Naive thymus-derived CD4-positive, alpha-beta T cell (primary cell): ENCODE measurements at regions of chr10 and their contacts with region 1.

Region 1: DNA sequence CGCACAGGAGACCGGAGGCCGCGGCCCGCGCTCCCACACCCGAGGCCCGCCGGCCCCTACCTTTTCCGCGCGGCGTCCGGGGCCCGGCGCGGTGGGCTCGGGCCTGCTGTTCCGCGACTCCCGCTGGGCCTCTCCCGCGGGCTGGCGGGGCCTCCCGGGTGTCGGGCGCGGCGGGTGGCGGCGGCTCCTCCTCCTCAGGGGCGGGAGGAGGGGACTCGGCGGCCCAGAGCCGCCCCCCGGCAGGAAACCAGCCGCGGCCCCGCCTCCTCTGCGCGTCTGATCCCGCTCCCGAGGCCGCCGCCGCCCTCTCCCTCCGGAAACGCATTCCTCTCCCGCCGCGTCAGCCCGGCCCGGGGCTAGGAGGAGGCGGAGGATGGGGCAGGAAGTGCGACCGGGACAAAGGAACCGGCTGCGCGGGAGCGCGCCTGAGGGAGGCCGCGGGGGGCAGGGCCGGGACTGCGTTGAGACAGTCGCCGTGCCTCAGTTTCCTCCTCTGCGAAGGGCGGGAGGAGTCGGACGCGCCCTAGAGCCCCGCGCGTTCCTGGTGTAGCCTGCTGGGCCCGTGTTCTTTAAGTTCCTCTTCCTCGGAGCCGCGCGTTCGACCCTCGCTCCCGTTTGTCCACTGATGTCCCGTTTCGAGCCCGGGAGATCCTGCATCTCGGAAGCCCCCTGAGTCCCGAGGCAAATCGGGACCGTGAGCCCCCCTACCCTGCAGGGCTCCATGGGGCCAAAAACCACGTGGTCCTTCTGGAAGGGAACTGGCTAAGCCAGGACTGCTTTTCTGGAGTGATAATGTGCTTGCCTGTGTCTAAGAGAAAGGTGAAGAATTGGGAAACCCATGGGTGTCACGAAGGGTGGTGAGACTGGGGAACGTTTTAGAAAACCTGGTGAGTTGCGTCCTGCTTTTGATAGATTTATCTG is at the start of gene ITGB1:
- DNase-seq: peak; percentile 73 to 91 (median 82)
- ATAC-seq: peak; percentile 95
- H3K4me3 ChIP-seq: peak within 1 kb of the TSS; percentile 88
- H3K4me3 Mint-ChIP-seq: peak within 1 kb of the TSS; percentile 78 to 95 (median 88)
- H3K27ac ChIP-seq: peak within 1 kb of the TSS; percentile 68
- H3K27ac Mint-ChIP-seq: peak within 1 kb of the TSS; percentile 74 to 90 (median 82)
- H3K4me1 ChIP-seq: peaks cover 7 to 8% of the 10 kb centered on the region in 2 donors
- H3K4me1 Mint-ChIP-seq: peaks cover 29 to 60% (median 54%) of the 10 kb centered on the region in 7 donors
- H3K27me3 ChIP-seq: no peaks in the 10 kb centered on the region
- H3K27me3 Mint-ChIP-seq: peaks cover 0 to 13% (median 0%) of the 10 kb centered on the region in 5 donors
- total RNA-seq, gene ITGB1: 43.2 to 205 (median 60.8) TPM

Region 2: GRCh38 chr10:32911285-32912016 is 46.9 kb before region 1 on chr10:
- CTCF ChIA-PET with region 1: no interaction called
- POLR2A ChIA-PET with region 1: no interaction called
- intact Hi-C with region 1: loop called in 1 of 2 experiments (anchors 1 kb)
- DNase-seq: no peak
- ATAC-seq: peak; percentile 34
- H3K4me3 ChIP-seq: no peak overlapping the region
- H3K4me3 Mint-ChIP-seq: no peak overlapping the region
- H3K27ac ChIP-seq: no peak overlapping the region
- H3K27ac Mint-ChIP-seq: no peak overlapping the region
- H3K4me1 ChIP-seq: no peaks in the 10 kb centered on the region
- H3K4me1 Mint-ChIP-seq: peaks cover 0 to 8% (median 0%) of the 10 kb centered on the region in 7 donors
- H3K27me3 ChIP-seq: no peaks in the 10 kb centered on the region
- H3K27me3 Mint-ChIP-seq: no peaks in the 10 kb centered on the region

Region 3: GRCh38 chr10:32971536-32972091 is 13.3 kb after region 1 on chr10:
- CTCF ChIA-PET with region 1: no interaction called
- POLR2A ChIA-PET with region 1: interaction called, 5 read pairs
- intact Hi-C with region 1: loop called in 1 of 2 experiments (anchors 1 kb)
- DNase-seq: no peak
- ATAC-seq: no peak
- H3K4me3 ChIP-seq: no peak overlapping the region
- H3K4me3 Mint-ChIP-seq: no peak overlapping the region
- H3K27ac ChIP-seq: no peak overlapping the region
- H3K27ac Mint-ChIP-seq: peak overlapping the region in 1 of 9 donors; percentile 7
- H3K4me1 ChIP-seq: no peaks in the 10 kb centered on the region
- H3K4me1 Mint-ChIP-seq: peaks cover 0 to 6% (median 0%) of the 10 kb centered on the region in 7 donors
- H3K27me3 ChIP-seq: no peaks in the 10 kb centered on the region
- H3K27me3 Mint-ChIP-seq: peaks cover 0 to 5% (median 0%) of the 10 kb centered on the region in 5 donors

Region 4: DNA sequence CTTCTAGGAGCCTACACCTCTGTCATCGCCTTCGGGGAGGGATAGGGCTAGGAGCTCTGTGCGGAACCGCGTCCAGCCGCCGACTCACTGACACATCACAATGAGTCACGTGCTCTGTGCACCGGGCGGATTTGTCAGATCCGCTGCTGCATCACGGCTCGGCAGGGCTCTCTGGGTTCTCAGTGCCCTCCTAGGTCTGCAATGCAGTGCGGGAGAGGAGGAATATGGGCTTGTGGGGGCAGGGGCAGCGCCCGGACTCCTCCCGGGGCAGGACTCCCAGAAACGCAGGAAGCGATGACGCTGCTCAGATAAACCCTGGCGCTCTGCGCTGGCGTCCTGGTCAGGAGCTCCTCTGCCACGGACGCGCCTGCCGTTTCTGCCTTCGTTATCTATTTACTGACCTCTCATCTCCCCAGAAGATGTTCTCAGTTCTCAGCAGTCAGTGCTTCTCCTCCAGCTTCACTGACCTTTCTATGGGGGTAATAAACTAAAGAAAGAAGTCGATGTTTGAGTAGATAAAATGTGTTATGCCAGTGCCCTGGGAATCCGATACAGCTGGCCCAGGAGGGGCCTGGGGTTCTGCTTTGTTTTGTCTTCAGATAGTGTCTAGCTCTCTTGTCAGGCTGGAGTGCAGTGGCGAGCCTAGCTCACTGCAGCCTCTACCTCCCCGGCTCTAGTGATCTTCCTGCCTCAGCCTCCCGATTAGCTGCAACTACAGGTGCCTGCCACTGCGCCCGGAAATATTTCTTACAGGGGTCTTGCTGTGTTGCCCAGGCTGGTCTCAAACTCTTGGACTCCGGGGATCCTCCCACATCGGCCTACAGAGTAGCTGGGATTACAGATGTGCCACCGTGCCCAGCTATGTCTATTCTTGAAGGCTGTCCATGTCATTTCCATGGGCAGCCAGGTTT is 22.5 kb after region 1 on chr10:
- CTCF ChIA-PET with region 1: interaction called, 3 read pairs
- POLR2A ChIA-PET with region 1: interaction called, 6 read pairs
- intact Hi-C with region 1: loop called (anchors 1 kb)
- DNase-seq: peak; percentile 54 to 84 (median 66)
- ATAC-seq: peak; percentile 95
- H3K4me3 ChIP-seq: peak overlapping the region; percentile 64
- H3K4me3 Mint-ChIP-seq: peak overlapping the region; percentile 90 to 99 (median 95)
- H3K27ac ChIP-seq: peak overlapping the region; percentile 56
- H3K27ac Mint-ChIP-seq: peak overlapping the region; percentile 82 to 99 (median 93)
- H3K4me1 ChIP-seq: peaks cover 11 to 32% of the 10 kb centered on the region in 2 donors
- H3K4me1 Mint-ChIP-seq: peaks cover 15 to 33% (median 24%) of the 10 kb centered on the region in 7 donors
- H3K27me3 ChIP-seq: no peaks in the 10 kb centered on the region
- H3K27me3 Mint-ChIP-seq: peaks cover 0 to 5% (median 0%) of the 10 kb centered on the region in 5 donors

Region 5: DNA sequence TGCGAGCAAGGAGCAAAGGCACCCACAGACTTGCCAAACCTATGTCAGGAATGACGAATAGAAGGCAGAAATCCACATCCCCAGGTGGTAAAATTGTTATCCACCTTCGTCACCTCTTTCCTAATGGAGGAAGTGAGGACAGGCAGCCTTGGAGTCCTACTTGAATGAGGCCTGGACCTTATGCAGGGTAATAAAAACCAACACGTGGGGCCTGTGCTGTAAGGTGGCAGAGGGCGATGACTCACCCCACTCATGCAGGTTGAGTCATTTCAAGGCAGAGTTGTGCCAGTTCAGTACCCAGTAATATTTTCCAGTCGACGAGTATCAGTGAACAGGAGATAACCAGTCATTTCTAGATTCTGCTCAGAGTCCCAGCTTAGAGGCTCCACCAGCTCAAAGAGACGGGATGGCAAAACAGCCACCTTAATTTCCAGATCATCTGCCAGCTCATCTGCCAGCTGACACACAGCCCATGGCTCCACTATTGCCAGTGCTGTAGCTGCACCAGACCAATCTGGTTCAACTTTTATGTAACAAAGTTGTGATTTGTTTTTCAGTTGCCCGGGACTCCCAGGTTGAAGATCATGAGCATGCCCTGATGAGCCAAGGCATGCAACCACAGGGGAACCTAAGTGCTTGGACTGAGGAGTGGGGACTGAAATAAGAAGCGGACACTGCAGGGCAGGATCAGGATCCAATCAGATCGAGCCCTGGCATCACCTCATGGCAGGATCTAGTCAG is 175.8 kb after region 1 on chr10:
- CTCF ChIA-PET with region 1: no interaction called
- POLR2A ChIA-PET with region 1: no interaction called
- intact Hi-C with region 1: loop called (anchors 1 to 5 kb)
- DNase-seq: peak in 2 of 9 donors; percentile 61 to 64
- ATAC-seq: peak; percentile 58
- H3K4me3 ChIP-seq: no peak overlapping the region
- H3K4me3 Mint-ChIP-seq: peak overlapping the region in 2 of 10 donors; percentile 27 to 50
- H3K27ac ChIP-seq: no peak overlapping the region
- H3K27ac Mint-ChIP-seq: peak overlapping the region in 8 of 9 donors; percentile 54 to 95 (median 82)
- H3K4me1 ChIP-seq: peaks cover 35 to 85% of the 10 kb centered on the region in 2 donors
- H3K4me1 Mint-ChIP-seq: peaks cover 25 to 78% (median 57%) of the 10 kb centered on the region in 7 donors
- H3K27me3 ChIP-seq: no peaks in the 10 kb centered on the region
- H3K27me3 Mint-ChIP-seq: no peaks in the 10 kb centered on the region

Region 6: DNA sequence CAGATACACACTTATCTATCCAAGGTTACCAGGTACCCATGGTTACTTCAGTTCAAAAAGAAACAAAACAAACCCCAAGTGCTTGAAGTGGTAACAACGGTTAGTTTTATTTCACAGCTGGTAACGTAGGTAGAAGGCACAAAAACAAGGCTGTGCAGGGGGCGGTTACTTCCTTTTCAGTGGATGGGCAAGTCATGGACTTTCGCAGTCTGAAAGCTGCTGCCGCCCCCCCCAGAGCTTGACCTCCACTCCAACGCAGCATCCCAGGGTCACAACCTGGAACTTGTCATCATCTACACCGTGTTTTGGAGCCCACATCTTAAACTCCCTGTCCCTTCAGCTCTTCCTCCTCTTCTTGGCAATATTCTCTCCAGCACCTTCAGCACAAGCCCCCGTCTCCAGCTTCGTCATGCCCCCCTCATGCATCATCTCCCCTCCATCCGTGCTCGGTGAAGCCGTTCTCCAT is 180.9 kb after region 1 on chr10:
- CTCF ChIA-PET with region 1: no interaction called
- POLR2A ChIA-PET with region 1: no interaction called
- intact Hi-C with region 1: loop called (anchors 1 to 5 kb)
- DNase-seq: peak; percentile 63 to 97 (median 95)
- ATAC-seq: peak; percentile 90
- H3K4me3 ChIP-seq: peak overlapping the region; percentile 31
- H3K4me3 Mint-ChIP-seq: peak overlapping the region; percentile 71 to 87 (median 80)
- H3K27ac ChIP-seq: peak overlapping the region; percentile 65
- H3K27ac Mint-ChIP-seq: peak overlapping the region; percentile 92 to 100 (median 96)
- H3K4me1 ChIP-seq: peaks cover 41 to 65% of the 10 kb centered on the region in 2 donors
- H3K4me1 Mint-ChIP-seq: peaks cover 30 to 77% (median 67%) of the 10 kb centered on the region in 7 donors
- H3K27me3 ChIP-seq: no peaks in the 10 kb centered on the region
- H3K27me3 Mint-ChIP-seq: no peaks in the 10 kb centered on the region

Region 7: GRCh38 chr10:33155720-33156638 is 197.6 kb after region 1 on chr10:
- CTCF ChIA-PET with region 1: no interaction called
- POLR2A ChIA-PET with region 1: interaction called, 4 read pairs
- intact Hi-C with region 1: loop called in 1 of 2 experiments (anchors 2 kb)
- DNase-seq: peak in 7 of 9 donors; percentile 28 to 65 (median 55)
- ATAC-seq: peak; percentile 85
- H3K4me3 ChIP-seq: no peak overlapping the region
- H3K4me3 Mint-ChIP-seq: no peak overlapping the region
- H3K27ac ChIP-seq: no peak overlapping the region
- H3K27ac Mint-ChIP-seq: peak overlapping the region in 8 of 9 donors; percentile 0 to 88 (median 41)
- H3K4me1 ChIP-seq: peaks cover 15 to 44% of the 10 kb centered on the region in 2 donors
- H3K4me1 Mint-ChIP-seq: peaks cover 8 to 41% (median 35%) of the 10 kb centered on the region in 7 donors
- H3K27me3 ChIP-seq: no peaks in the 10 kb centered on the region
- H3K27me3 Mint-ChIP-seq: no peaks in the 10 kb centered on the region